ENCODE measurements at regions of chr2 and their contacts with region 1.

Region 1: GRCh38 chr2:172200495-172201085 is 97.9 kb upstream of the DLX2 start:
- DNase-seq: peak; percentile 47
- H3K4me3 ChIP-seq: no peak overlapping the region
- H3K27ac ChIP-seq: no peak overlapping the region
- H3K4me1 ChIP-seq: peaks cover 35% of the 10 kb centered on the region
- H3K27me3 ChIP-seq: no peaks in the 10 kb centered on the region
- CTCF ChIP-seq: peak; percentile 67 to 76

Region 2: GRCh38 chr2:172179045-172179701 is 21.4 kb before region 1 on chr2:
- CTCF ChIA-PET with region 1: interaction called, 3 read pairs
- dilution Hi-C with region 1: no loop called
- in situ Hi-C with region 1: no loop called
- intact Hi-C with region 1: loop called (anchors 1 kb)
- DNase-seq: peak; percentile 98
- H3K4me3 ChIP-seq: no peak overlapping the region
- H3K27ac ChIP-seq: peak overlapping the region; percentile 11
- H3K4me1 ChIP-seq: peaks cover 33% of the 10 kb centered on the region
- H3K27me3 ChIP-seq: no peaks in the 10 kb centered on the region
- CTCF ChIP-seq: no peak

Region 3: GRCh38 chr2:172234716-172235691 is 34.4 kb after region 1 on chr2:
- CTCF ChIA-PET with region 1: no interaction called
- dilution Hi-C with region 1: no loop called
- in situ Hi-C with region 1: no loop called
- intact Hi-C with region 1: loop called (anchors 1 kb)
- DNase-seq: no peak
- H3K4me3 ChIP-seq: peak overlapping the region; percentile 3 to 23 (median 16)
- H3K27ac ChIP-seq: no peak overlapping the region
- H3K4me1 ChIP-seq: peaks cover 49% of the 10 kb centered on the region
- H3K27me3 ChIP-seq: no peaks in the 10 kb centered on the region
- CTCF ChIP-seq: no peak

Region 4: DNA sequence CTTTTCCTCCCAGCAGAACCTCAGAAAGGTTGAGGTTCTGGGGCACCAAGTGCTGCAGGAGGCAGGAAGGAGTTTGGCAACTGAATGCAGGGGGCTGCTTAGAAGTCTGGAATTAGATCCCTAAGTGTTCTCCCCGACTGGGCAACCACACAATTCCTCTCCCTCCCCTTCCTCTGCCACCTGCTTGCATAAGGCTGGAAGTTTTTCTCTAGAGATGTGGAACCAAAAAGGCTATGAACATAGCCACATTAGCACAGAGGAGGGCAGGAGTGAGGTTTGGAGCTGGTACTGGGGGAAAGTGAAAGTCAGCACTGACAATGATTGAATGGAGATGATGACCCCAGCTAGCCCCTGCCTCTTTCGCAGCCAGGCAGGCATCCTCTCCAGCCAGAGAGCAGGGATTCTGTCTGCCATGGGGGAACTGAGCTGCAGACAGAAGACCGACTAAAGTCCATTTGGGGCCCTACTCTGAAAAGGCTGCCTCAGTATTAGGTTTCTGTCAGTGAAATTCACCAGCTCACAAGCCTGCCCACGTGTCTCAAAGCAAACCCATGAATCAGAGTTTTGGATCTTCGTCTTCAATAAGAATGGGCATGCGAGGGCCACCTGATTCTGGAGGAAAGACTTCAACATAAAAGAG is 138.9 kb after region 1 on chr2:
- CTCF ChIA-PET with region 1: no interaction called
- dilution Hi-C with region 1: no loop called
- in situ Hi-C with region 1: no loop called
- intact Hi-C with region 1: no loop called
- DNase-seq: peak; percentile 33
- H3K4me3 ChIP-seq: no peak overlapping the region
- H3K27ac ChIP-seq: no peak overlapping the region
- H3K4me1 ChIP-seq: peaks cover 4% of the 10 kb centered on the region
- H3K27me3 ChIP-seq: no peaks in the 10 kb centered on the region
- CTCF ChIP-seq: peak in 1 of 2 donors; percentile 15

Region 5: GRCh38 chr2:172427256-172427989 is 226.8 kb after region 1 on chr2 and contains the start of gene ITGA6:
- CTCF ChIA-PET with region 1: no interaction called
- dilution Hi-C with region 1: loop called (anchors 5 kb)
- in situ Hi-C with region 1: no loop called
- intact Hi-C with region 1: loop called (anchors 5 kb)
- DNase-seq: peak; percentile 91
- H3K4me3 ChIP-seq: peak within 1 kb of the TSS; percentile 86 to 95 (median 87)
- H3K27ac ChIP-seq: peak within 1 kb of the TSS; percentile 93
- H3K4me1 ChIP-seq: peaks cover 23% of the 10 kb centered on the region
- H3K27me3 ChIP-seq: no peaks in the 10 kb centered on the region
- CTCF ChIP-seq: peak in 1 of 2 donors; percentile 24
- total RNA-seq, gene ITGA6: 562 to 887 TPM

Region 6: DNA sequence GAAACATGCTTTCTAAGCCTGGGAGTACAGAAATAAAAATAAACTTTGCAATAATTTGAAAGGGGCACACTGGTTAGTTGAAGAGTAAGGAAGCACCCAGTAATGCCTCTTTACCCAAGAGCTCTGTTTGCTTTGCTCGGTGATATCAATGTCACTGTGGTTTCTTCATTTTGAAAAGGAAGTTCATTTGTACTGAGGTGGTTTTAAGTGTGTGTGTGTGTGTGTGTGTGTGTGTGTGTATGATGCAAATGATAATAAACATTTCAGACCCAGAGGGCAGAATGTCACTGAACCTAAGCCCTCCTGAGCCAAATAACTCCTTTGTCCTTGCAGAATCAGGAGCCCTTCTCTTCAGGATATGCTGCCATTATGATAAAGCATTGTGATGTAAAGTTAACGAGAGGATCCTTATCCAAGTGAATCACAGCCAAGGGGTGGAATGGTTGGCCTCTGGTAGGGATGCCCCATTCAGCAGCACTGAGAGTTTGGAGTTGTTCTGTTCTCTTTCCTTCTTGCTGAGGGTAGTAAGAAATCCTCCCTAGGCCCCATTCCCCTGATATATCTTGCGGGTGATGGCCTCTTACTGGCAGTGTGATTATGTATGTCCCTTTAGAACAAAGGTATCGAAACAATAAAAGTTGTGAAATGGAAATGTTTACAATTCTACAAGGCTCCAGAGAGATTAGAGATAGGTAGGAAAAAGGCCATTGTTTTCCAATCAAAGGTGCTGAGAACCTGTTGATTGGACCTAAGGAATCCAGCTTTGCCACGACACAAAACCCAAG is 234.4 kb after region 1 on chr2:
- CTCF ChIA-PET with region 1: no interaction called
- dilution Hi-C with region 1: loop called (anchors 5 kb)
- in situ Hi-C with region 1: no loop called
- intact Hi-C with region 1: no loop called
- DNase-seq: no peak
- H3K4me3 ChIP-seq: no peak overlapping the region
- H3K27ac ChIP-seq: peak overlapping the region; percentile 99
- H3K4me1 ChIP-seq: peaks cover 91% of the 10 kb centered on the region
- H3K27me3 ChIP-seq: no peaks in the 10 kb centered on the region
- CTCF ChIP-seq: no peak

Region 7: DNA sequence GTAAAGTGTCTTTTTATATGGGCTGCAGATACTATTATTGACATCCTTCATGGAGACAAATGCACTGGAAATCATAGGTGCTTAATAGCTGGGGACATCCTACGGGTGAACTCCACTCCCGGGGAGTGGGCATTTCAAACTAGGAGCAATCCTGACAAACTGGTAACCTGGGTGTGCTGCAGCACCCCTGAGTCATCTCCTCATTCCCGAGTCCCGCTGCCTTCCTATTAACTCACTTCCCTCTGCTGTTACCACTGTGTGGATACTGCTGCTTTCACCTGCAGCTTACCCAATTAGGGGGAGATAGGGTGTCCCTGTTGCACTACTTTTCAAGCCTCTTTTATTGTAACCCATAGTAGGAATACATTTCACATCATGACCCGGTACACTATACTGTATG is 669.3 kb after region 1 on chr2:
- CTCF ChIA-PET with region 1: no interaction called
- dilution Hi-C with region 1: no loop called
- in situ Hi-C with region 1: no loop called
- intact Hi-C with region 1: no loop called
- DNase-seq: no peak
- H3K4me3 ChIP-seq: no peak overlapping the region
- H3K27ac ChIP-seq: no peak overlapping the region
- H3K4me1 ChIP-seq: no peaks in the 10 kb centered on the region
- H3K27me3 ChIP-seq: no peaks in the 10 kb centered on the region
- CTCF ChIP-seq: no peak